Panc1 (cell line): ENCODE measurements at regions of chr14 and their contacts with region 1.

Region 1: DNA sequence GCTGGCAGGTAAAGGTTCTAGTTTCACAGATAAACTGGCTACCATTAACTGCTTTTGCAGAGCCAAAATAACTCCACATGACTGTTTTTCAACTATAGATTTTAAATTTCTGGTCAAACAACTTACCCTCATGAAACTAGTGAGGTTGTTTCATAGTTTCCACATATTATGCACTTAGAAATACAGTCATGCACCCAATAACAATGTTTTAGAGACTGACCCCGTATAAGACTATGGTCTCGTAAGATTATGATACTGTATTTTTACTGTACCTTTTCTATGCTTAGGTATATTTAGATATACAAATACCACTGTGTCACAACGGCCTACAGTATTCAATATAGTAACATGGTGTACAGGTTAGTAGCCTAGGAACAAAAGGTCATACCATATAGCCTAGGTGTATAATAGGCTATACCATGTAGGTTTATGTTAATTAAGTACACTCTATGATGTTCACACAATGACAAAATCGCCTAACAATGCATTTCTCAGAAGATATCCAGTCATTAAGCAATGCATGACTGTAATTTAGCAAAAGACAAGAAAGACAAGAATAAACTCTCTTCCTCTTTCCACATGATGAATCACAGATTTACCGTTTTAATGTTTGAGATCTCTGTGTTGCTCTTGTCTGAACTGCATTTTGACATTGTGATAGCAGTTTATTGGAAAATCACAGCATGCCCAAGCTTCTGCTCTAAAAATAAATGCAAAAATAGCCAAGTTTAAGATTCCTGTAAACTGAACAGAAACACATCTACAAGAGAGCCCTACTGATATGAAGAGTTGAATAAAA is 17.1 kb downstream of the DICER1 start:
- DNase-seq: no peak
- ATAC-seq: no peak
- H3K4me3 ChIP-seq: no peak overlapping the region
- H3K27ac ChIP-seq: no peak overlapping the region
- H3K4me1 ChIP-seq: peaks cover 11% of the 10 kb centered on the region
- H3K27me3 ChIP-seq: no peaks in the 10 kb centered on the region
- CTCF ChIP-seq: no peak

Region 2: GRCh38 chr14:95157327-95158189 is 17.3 kb after region 1 on chr14 and contains the start of gene DICER1:
- CTCF ChIA-PET with region 1: interaction called, 10 read pairs
- POLR2A ChIA-PET with region 1: no interaction called
- in situ Hi-C with region 1: no loop called
- intact Hi-C with region 1: no loop called
- DNase-seq: peak; percentile 27
- ATAC-seq: peak; percentile 93
- H3K4me3 ChIP-seq: peak within 1 kb of the TSS; percentile 70 to 73
- H3K27ac ChIP-seq: peak within 1 kb of the TSS; percentile 91
- H3K4me1 ChIP-seq: peaks cover 16% of the 10 kb centered on the region
- H3K27me3 ChIP-seq: no peaks in the 10 kb centered on the region
- CTCF ChIP-seq: no peak
- total RNA-seq, gene DICER1: 32.7 TPM

Region 3: DNA sequence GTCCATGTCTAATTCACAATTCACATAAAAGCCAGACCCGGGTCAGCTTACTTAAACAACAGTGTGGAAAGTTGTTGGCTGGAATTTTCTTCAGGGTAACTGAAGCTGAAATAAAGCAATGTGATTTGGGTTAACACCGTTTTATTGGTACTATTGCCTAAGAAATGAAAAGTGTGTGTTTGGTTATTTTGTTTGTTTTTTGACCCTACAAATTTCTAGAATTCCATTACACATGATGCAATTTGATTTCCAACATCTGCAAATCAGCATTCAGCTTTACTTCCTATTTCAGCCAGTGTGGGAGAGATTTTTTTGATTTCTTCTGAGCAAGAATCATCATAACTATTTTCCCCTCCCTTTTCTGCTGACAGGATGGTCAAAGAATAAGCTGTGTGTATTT is 225.1 kb after region 1 on chr14:
- CTCF ChIA-PET with region 1: no interaction called
- POLR2A ChIA-PET with region 1: interaction called, 14 read pairs
- in situ Hi-C with region 1: no loop called
- intact Hi-C with region 1: no loop called
- DNase-seq: no peak
- ATAC-seq: no peak
- H3K4me3 ChIP-seq: no peak overlapping the region
- H3K27ac ChIP-seq: no peak overlapping the region
- H3K4me1 ChIP-seq: no peaks in the 10 kb centered on the region
- H3K27me3 ChIP-seq: no peaks in the 10 kb centered on the region
- CTCF ChIP-seq: no peak

Region 4: DNA sequence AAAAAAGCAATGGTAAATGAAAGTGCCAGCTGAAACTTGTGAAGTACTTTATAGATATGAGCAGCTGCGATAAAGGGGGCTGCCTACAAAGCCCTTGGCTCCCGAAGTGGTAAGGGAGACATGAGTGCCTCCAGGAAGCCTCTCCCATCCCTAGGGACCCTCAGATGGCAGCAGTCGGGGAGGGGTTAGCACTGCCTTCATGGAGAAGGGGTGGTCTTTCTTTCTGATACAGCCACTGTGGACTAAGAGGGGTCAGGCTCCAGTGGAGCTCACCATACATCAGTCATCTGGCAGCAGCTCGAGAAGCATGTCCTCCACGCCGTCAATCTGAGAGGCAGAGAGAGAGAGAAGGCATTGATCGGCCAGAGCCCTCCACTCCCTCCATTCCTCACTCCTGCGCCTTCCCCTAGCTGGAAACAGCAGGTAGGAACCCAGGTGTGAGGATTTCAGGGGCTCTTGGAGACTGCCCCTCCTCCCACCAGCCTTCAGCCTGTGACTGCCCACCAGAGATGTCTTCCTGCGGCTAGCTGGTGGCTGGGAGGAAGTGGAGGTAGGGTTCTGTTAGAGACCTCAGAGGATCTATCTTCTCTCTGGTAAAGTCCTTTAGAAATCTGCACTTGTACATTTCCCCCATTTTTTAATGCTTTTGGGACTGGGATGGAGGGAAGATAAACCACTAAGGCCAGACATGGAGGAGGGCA is 571.4 kb after region 1 on chr14:
- CTCF ChIA-PET with region 1: no interaction called
- POLR2A ChIA-PET with region 1: no interaction called
- in situ Hi-C with region 1: no loop called
- intact Hi-C with region 1: no loop called
- DNase-seq: no peak
- ATAC-seq: no peak
- H3K4me3 ChIP-seq: no peak overlapping the region
- H3K27ac ChIP-seq: no peak overlapping the region
- H3K4me1 ChIP-seq: no peaks in the 10 kb centered on the region
- H3K27me3 ChIP-seq: no peaks in the 10 kb centered on the region
- CTCF ChIP-seq: no peak